ENCODE measurements at regions of chr19 and their contacts with region 1.

Region 1: DNA sequence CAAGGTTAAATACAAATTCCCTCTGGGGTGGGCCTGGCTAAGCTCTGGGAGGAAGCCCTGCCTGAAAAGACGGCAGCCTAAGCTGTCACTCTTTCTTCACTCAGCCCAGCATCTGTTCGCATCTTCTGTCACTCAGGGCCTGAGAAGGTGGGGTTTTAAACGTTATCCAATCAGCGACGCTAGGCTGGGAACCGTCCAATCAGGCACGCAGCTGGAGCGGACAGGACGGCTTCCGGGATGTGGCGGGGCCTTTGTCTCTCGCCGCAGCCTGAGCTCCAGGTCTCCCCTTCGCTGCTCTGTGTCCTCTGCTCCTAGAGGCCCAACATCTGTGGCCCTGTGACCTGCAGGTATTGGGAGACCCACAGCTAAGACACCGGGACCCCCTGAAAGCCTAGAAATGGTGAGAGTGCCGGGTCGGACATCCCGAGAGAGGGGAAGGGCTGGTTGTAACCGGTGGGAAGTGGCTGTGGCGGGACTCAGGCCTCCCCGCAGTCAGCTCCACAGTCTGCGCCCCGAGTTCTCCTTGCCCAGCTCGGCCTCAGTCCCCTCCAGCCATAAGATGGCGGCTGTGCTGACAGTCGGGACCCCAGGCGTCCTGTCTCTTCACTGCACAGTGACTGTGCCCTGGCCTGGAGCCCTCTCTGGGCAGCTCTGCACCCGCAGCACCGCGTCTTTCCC is at the start of gene ZNF431:
- DNase-seq: peak; percentile 89 to 93
- ATAC-seq: peak; percentile 100
- H3K4me3 ChIP-seq: peak within 1 kb of the TSS; percentile 66 to 89 (median 82)
- H3K27ac ChIP-seq: peak within 1 kb of the TSS; percentile 72 to 79 (median 78)
- H3K4me1 ChIP-seq: peaks cover 10 to 17% of the 10 kb centered on the region in 2 donors
- H3K27me3 ChIP-seq: no peaks in the 10 kb centered on the region
- CTCF ChIP-seq: no peak
- POLR2A ChIP-seq: peak; percentile 49 to 57
- total RNA-seq, gene ZNF431: 5.1 to 7.6 (median 6.7) TPM

Region 2: GRCh38 chr19:21020298-21021227 is 121.4 kb before region 1 on chr19 and contains the start of gene ZNF430:
- in situ Hi-C with region 1: no loop called
- intact Hi-C with region 1: loop called (anchors 2 kb)
- DNase-seq: peak; percentile 86 to 92
- ATAC-seq: peak; percentile 100
- H3K4me3 ChIP-seq: peak within 1 kb of the TSS; percentile 61 to 89 (median 68)
- H3K27ac ChIP-seq: peak within 1 kb of the TSS; percentile 63 to 83 (median 76)
- H3K4me1 ChIP-seq: peaks cover 0 to 3% of the 10 kb centered on the region in 2 donors
- H3K27me3 ChIP-seq: no peaks in the 10 kb centered on the region
- CTCF ChIP-seq: no peak
- POLR2A ChIP-seq: peak; percentile 27 to 41
- total RNA-seq, gene ZNF430: 1.3 to 5.9 (median 2.0) TPM

Region 3: GRCh38 chr19:21130097-21130775 is 11.7 kb before region 1 on chr19:
- in situ Hi-C with region 1: no loop called
- intact Hi-C with region 1: no loop called
- DNase-seq: no peak
- ATAC-seq: no peak
- H3K4me3 ChIP-seq: no peak overlapping the region
- H3K27ac ChIP-seq: no peak overlapping the region
- H3K4me1 ChIP-seq: no peaks in the 10 kb centered on the region
- H3K27me3 ChIP-seq: no peaks in the 10 kb centered on the region
- CTCF ChIP-seq: no peak
- POLR2A ChIP-seq: no peak

Measured in gastrocnemius medialis (tissue), 4 donors.